ENCODE measurements at regions of chr1 and their contacts with region 1.

Region 1: DNA sequence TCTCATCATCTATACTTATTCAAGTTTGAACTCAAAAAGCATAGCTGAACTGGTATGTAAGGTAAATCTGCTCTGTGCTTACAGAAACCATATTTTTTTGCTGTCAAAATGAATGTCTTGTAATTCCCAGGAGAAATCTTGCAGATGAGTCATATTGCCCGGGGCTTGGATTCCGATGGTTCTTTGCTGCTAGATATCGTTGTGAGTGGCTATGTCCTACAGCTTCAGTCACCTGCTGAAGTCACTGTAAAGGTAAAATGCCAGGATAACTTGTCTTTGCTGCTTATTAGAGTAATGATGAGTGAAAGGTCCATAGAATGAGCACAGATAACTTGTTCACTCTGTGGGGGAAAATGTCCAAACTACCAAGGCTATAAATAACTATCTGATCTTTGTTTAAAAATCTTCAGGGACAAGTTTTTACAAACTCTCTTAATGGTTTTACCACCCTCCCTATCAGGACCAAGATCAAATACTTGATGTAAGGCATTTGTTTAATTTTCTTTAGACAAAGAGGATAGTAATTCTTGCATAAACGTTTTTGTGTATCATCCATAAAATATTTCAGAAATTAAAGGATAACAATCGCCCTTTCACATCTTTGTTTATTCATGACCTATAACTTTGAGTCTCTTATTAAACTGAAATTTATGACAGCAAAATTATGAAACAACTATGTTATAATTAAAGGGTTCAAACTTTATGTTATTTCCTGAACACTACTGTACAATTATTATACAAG is 222.3 kb downstream of the TPR start:
- DNase-seq: no peak
- ATAC-seq: no peak
- H3K4me3 ChIP-seq: no peak overlapping the region
- H3K4me1 ChIP-seq: no peaks in the 10 kb centered on the region
- CTCF ChIP-seq: no peak

Region 2: DNA sequence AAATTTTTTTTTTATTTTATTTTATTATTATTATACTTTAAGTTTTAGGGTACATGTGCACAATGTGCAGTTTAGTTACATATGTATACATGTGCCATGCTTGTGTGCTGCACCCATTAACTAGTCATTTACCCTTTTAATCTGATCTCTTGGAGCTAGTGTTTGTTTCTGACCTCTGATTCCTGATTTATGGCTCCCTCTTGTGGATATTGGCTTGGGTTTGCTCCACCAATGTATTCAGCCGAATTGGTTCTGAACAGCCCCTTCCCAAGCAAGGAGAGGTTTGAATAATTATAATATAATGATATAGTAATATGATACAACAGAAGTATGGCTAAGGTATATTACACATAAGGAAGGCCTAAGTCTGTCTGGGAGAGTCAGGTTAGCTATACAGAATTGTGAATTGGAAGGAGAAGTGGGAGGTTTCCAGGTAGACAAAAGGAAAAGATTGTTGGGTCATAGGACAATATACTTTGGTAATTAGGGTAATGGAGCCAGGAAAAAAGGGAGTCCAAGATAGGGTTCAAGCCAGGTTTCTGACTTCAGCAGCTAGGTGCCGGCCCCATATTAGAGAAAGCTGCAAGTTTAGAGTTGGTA is 471.7 kb before region 1 on chr1:
- intact Hi-C with region 1: no loop called
- DNase-seq: peak in 1 of 3 donors; percentile 57
- ATAC-seq: peak; percentile 73
- H3K4me3 ChIP-seq: no peak overlapping the region
- H3K4me1 ChIP-seq: no peaks in the 10 kb centered on the region
- CTCF ChIP-seq: peak; percentile 27

Region 3: GRCh38 chr1:185984113-185984836 is 168.5 kb before region 1 on chr1:
- intact Hi-C with region 1: no loop called
- DNase-seq: no peak
- ATAC-seq: no peak
- H3K4me3 ChIP-seq: no peak overlapping the region
- H3K4me1 ChIP-seq: no peaks in the 10 kb centered on the region
- CTCF ChIP-seq: no peak

Region 4: DNA sequence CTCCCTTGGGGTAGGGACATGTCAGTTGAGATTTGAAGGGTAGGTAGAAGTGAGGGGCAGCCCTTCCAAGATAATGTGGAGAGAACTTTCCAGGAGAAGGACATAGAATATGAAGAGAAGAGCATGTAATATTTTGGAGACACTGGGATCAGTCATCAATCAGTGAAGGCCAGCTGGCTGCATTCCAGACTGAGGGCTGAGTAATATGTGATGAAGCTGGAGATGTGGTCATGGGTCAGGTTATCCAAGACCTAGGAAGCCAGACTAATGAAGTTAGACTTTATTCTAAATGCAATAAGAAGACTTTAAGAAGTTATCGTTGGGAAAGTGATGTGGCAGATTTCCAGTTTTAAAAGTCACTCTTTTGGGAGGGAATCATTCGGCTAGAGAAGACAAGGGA is 156.6 kb before region 1 on chr1:
- intact Hi-C with region 1: no loop called
- DNase-seq: no peak
- ATAC-seq: no peak
- H3K4me3 ChIP-seq: no peak overlapping the region
- H3K4me1 ChIP-seq: no peaks in the 10 kb centered on the region
- CTCF ChIP-seq: no peak

Region 5: GRCh38 chr1:186014370-186015030 is 138.3 kb before region 1 on chr1:
- intact Hi-C with region 1: no loop called
- DNase-seq: no peak
- ATAC-seq: no peak
- H3K4me3 ChIP-seq: no peak overlapping the region
- H3K4me1 ChIP-seq: no peaks in the 10 kb centered on the region
- CTCF ChIP-seq: no peak

Region 6: DNA sequence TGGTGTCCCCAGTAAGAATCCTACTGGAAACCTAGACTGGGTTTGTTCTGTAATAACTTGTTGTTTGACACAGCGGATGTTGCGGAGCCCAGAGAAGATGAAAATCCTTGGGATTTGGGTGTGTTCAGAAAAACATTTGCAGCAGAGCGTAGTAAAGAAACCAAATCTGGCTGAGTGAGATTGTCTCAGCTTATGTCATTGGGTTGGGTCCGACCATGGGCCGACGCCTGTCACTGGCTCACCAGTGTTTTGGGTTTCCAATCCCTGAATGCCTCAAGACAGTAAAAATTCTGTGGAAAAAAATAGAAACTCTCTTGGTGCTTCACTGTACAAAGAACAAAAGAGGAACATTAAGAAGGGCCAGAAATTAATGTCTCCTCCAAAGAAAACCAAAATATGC is 76.0 kb after region 1 on chr1:
- intact Hi-C with region 1: loop called in 1 of 2 experiments (anchors 2 kb)
- DNase-seq: no peak
- ATAC-seq: no peak
- H3K4me3 ChIP-seq: no peak overlapping the region
- H3K4me1 ChIP-seq: no peaks in the 10 kb centered on the region
- CTCF ChIP-seq: no peak

Measured in mucosa of descending colon (tissue), 3 donors.